Activated B cell treated with CpG ODN at 0.5 μM for 24 hours (primary cell): ENCODE measurements at regions of chr11 and their contacts with region 1.

Region 1: DNA sequence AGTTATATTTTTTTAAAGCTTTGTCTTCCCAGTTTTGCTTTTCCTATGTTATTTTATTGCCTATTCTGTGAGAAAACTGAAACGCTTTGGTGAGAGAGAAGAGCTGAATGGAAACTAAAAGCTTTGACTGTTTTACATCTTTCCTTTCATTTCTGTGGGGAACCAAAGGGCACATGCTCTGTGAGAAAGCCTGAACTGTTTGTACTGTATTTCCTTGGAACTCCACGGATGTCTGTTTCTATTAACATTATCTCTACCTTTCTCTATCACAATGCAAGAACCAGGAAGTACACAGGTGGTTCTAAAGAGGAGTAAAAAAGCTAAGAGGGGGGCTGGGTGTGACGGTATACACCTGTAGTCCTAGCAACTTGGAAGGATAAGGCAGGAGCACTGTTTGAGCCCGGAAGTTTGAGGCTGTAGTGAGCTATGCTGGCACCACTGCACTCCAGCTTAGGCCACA is 43.8 kb downstream of the CELF1 start:
- DNase-seq: no peak
- ATAC-seq: no peak
- H3K4me3 Mint-ChIP-seq: peak overlapping the region; percentile 49
- H3K27ac Mint-ChIP-seq: peak overlapping the region; percentile 54
- H3K4me1 Mint-ChIP-seq: peaks cover 83% of the 10 kb centered on the region
- H3K27me3 Mint-ChIP-seq: no peaks in the 10 kb centered on the region
- CTCF ChIP-seq: no peak

Region 2: GRCh38 chr11:47415949-47416472 is 93.1 kb before region 1 on chr11:
- CTCF ChIA-PET with region 1: no interaction called
- POLR2A ChIA-PET with region 1: no interaction called
- intact Hi-C with region 1: no loop called
- DNase-seq: no peak
- ATAC-seq: no peak
- H3K4me3 Mint-ChIP-seq: no peak overlapping the region
- H3K27ac Mint-ChIP-seq: no peak overlapping the region
- H3K4me1 Mint-ChIP-seq: no peaks in the 10 kb centered on the region
- H3K27me3 Mint-ChIP-seq: no peaks in the 10 kb centered on the region
- CTCF ChIP-seq: no peak

Region 3: GRCh38 chr11:47433991-47434786 is 74.9 kb before region 1 on chr11:
- CTCF ChIA-PET with region 1: no interaction called
- POLR2A ChIA-PET with region 1: no interaction called
- intact Hi-C with region 1: no loop called
- DNase-seq: no peak
- ATAC-seq: no peak
- H3K4me3 Mint-ChIP-seq: no peak overlapping the region
- H3K27ac Mint-ChIP-seq: no peak overlapping the region
- H3K4me1 Mint-ChIP-seq: no peaks in the 10 kb centered on the region
- H3K27me3 Mint-ChIP-seq: no peaks in the 10 kb centered on the region
- CTCF ChIP-seq: no peak

Region 4: DNA sequence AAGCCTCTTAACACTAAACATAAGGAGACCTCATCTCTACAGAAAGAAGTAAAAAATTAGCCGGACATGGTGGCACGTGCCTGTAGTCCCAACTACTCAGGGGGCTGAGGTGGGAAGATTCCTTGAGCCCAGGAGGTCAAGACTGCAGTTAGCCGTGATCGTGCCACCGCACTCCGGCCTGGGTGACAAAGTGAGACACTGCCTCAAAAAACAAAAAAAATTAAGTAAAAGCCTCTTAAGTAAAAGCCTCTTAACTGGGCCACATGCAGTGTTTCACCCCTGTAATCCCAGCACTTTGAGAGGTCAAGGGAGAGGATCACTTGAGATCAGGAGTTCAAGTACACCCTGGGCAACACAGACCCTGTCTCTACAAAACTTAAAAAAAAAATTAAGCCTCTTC is 18.1 kb after region 1 on chr11:
- CTCF ChIA-PET with region 1: no interaction called
- POLR2A ChIA-PET with region 1: no interaction called
- intact Hi-C with region 1: no loop called
- DNase-seq: no peak
- ATAC-seq: no peak
- H3K4me3 Mint-ChIP-seq: no peak overlapping the region
- H3K27ac Mint-ChIP-seq: no peak overlapping the region
- H3K4me1 Mint-ChIP-seq: peaks cover 52% of the 10 kb centered on the region
- H3K27me3 Mint-ChIP-seq: no peaks in the 10 kb centered on the region
- CTCF ChIP-seq: no peak

Region 5: DNA sequence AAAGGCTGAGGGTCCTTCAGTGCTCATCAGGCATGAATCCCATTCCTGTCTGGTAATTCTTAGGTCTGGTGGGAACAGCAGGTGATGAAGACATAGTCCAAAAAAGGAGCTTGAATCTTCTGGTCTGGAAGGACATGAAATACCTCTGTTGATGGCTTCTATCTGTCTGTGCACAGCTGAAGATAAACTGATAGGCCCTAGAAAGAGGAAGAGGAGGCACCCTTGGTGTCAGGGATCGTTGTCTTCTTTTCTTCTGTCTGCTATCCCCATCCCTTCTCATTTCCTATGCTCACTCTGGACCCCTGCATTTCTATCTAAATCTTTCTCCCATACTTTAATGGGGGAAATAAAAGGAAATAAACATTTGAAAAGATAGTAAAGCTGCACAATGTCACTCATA is 196.6 kb after region 1 on chr11:
- CTCF ChIA-PET with region 1: no interaction called
- POLR2A ChIA-PET with region 1: no interaction called
- intact Hi-C with region 1: no loop called
- DNase-seq: no peak
- ATAC-seq: no peak
- H3K4me3 Mint-ChIP-seq: no peak overlapping the region
- H3K27ac Mint-ChIP-seq: no peak overlapping the region
- H3K4me1 Mint-ChIP-seq: no peaks in the 10 kb centered on the region
- H3K27me3 Mint-ChIP-seq: no peaks in the 10 kb centered on the region
- CTCF ChIP-seq: no peak

Region 6: DNA sequence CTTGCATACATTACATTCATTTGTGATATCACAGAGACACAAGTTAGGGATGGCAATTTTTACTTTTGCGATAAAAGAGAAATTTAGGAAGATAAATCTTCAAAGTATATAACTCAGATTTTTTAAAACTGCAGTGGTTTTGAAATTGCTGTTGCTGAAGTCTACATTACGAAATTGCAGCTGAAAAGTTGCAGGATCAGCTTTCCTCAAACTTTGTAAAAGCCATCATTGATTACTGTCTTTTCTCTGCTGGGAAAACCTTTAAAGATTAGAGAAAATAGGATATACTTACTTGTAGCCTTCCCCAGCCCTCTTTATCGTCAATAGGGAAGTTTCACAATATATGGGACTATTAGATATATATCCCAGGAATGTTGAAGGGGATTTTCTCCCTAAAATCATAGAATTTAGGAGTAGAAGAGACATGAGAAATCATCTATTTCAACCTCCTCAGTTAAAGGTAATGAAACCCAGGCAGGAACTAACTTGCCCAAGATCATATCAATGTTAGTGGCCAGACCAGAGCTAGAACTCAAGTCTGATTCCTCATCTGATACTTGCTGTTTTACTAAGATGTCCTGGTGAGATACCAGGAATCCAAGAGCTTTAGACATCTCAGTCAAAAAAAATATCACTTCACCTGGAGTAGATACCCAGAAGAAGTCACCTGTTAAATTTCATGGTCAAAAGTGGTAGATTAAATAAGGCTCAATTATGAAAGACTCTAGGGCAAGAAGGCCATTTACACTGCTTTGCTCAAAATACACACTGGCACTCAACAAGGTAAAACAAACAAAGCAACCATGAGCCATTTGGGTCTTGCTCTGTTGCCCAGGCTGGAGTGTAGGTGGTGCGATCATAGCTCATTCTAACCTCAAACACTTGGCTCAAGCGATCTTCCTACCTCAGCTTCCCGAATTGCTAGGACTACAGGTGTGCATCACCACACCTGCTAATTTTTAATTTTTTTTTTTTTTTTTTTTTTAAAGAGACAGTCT is 216.6 kb after region 1 on chr11:
- CTCF ChIA-PET with region 1: no interaction called
- POLR2A ChIA-PET with region 1: interaction called, 11 read pairs
- intact Hi-C with region 1: no loop called
- DNase-seq: no peak
- ATAC-seq: no peak
- H3K4me3 Mint-ChIP-seq: no peak overlapping the region
- H3K27ac Mint-ChIP-seq: no peak overlapping the region
- H3K4me1 Mint-ChIP-seq: no peaks in the 10 kb centered on the region
- H3K27me3 Mint-ChIP-seq: no peaks in the 10 kb centered on the region
- CTCF ChIP-seq: no peak